ENCODE measurements at regions of chr17 and their contacts with region 1.

Region 1: DNA sequence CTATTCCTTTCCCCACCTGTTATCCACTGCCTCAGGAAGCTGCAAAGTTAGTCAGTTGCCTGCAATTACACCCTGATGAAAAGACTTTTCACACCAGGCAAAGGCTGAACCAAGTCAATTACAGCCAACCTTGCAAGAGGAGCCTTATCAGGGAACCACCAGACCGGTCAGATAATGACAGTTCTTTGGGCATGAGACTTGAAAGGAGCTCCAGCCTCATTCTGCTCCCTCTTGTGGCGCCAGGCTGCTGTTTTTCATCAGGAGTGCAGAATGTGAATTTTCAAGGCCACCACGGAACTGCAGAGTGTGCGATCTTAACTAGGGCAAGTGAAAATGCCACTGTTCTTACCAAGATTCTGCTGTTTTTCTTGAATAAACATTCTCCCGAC is 22.5 kb downstream of the DNAI2 start:
- DNase-seq: no peak
- H3K27ac ChIP-seq: no peak overlapping the region
- CTCF ChIP-seq: peak; percentile 55

Region 2: DNA sequence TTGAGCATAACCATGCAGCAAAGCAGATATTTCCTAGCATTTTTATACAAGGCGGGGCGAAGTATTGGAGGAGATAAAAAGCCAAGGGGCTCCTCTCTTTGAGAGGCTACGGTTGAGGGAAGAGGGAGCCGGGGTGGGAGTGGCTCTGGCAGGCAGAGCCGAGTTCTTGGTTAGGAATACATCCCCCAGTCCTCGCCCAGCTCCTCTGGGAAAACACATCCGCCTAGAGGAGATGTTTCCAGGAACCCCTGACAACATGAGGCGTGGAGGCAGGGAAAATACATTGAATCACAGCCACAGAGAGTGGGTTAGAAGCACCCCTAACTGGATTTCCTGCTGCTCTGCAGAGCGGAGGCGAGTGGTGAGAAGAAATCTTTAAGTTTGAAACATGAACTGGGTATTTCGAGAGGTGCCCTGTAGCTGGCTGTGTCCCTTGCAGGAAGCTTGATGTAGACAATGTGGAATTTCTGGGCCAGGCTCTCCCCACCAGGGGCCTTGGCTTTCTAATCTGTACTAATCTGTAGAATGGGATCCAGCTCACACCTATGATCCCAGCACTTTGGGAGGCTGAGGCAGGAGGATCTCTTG is 55.8 kb before region 1 on chr17:
- CTCF ChIA-PET with region 1: no interaction called
- POLR2A ChIA-PET with region 1: no interaction called
- DNase-seq: no peak
- H3K27ac ChIP-seq: no peak overlapping the region
- CTCF ChIP-seq: no peak

Region 3: GRCh38 chr17:74280093-74280513 is 16.4 kb before region 1 on chr17:
- CTCF ChIA-PET with region 1: interaction called, 12 read pairs
- POLR2A ChIA-PET with region 1: no interaction called
- DNase-seq: no peak
- H3K27ac ChIP-seq: no peak overlapping the region
- CTCF ChIP-seq: no peak

Region 4: DNA sequence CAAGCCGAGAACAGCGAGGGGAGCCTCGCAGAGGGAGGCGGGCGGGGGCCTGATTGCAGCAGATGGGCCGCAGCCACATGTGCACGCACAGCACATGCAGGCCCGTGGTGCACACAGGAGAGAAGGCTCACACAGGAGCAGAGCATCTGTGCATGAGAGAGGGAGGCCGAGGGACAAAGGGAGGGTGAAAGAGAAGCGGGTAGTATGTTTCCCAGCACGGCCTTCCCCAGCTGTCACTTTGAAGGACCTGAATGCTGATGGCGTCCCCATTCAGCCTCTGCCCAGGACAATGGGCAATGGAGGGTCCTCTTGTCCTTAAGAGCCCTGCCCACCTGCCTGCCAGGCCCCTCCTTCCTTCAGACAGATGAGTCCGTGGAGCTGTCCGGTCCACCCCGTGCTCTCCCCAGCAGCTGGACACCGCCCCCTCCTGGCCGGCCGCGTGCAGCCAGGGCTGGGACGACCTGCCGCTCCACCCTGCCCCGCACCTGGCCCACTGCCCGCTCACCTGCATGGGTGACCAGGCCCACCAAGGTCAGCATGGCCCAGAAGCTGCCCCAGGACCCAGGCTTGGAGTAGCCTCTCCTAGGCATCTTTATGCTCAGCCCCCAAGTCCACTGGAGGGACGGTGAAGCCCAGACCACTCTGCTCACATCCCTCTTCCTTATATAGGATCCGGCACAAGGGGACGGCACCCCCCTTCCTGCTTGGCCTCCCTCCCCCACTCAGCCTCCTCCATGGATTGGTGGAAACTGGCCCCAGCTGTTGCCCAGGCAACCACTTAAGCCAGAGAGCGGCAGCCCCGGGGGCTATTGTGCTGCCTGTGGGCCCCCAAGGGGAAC is 64.9 kb after region 1 on chr17 and contains the start of gene BTBD17:
- CTCF ChIA-PET with region 1: interaction called, 10 read pairs
- POLR2A ChIA-PET with region 1: no interaction called
- DNase-seq: no peak
- H3K27ac ChIP-seq: no peak within 1 kb of the TSS
- CTCF ChIP-seq: peak; percentile 53

Measured in RWPE1 (cell line).